HepG2 (cell line): ENCODE measurements at regions of chr7 and their contacts with region 1.

Region 1: GRCh38 chr7:44973610-44974401 is 5.0 kb downstream of the MYO1G start:
- DNase-seq: peak; percentile 34
- ATAC-seq: peak; percentile 22
- H3K4me3 ChIP-seq: peak overlapping the region in 1 of 3 experiments; percentile 59; a peak in 1 of 6 replicates
- H3K27ac ChIP-seq: no peak overlapping the region
- H3K4me1 ChIP-seq: peaks cover 67% of the 10 kb centered on the region
- H3K27me3 ChIP-seq: peaks cover 4 to 5% of the 10 kb centered on the region in 2 experiments; a peak in 2 of 5 replicates
- CTCF ChIP-seq: peak; percentile 64
- EP300 ChIP-seq: no peak
- POLR2A ChIP-seq: no peak
- RAD21 ChIP-seq: no peak

Region 2: GRCh38 chr7:44999245-45000095 is 25.7 kb after region 1 on chr7:
- CTCF ChIA-PET with region 1: no interaction called
- POLR2A ChIA-PET with region 1: interaction called, 83 read pairs
- in situ Hi-C with region 1: no loop called
- intact Hi-C with region 1: loop called (anchors 2 kb)
- DNase-seq: peak; percentile 97
- ATAC-seq: peak; percentile 95
- H3K4me3 ChIP-seq: peak overlapping the region; percentile 74 to 99 (median 80)
- H3K27ac ChIP-seq: peak overlapping the region; percentile 70
- H3K4me1 ChIP-seq: peaks cover 23% of the 10 kb centered on the region
- H3K27me3 ChIP-seq: no peaks in the 10 kb centered on the region
- CTCF ChIP-seq: peak; percentile 26; the same call in 1 of the 2 replicates
- EP300 ChIP-seq: no peak
- POLR2A ChIP-seq: peak; percentile 25 to 59; a peak in 3 of 4 replicates
- RAD21 ChIP-seq: 0 out of 2 replicates have a peak, but pooled peaks have one; percentile 18

Region 3: DNA sequence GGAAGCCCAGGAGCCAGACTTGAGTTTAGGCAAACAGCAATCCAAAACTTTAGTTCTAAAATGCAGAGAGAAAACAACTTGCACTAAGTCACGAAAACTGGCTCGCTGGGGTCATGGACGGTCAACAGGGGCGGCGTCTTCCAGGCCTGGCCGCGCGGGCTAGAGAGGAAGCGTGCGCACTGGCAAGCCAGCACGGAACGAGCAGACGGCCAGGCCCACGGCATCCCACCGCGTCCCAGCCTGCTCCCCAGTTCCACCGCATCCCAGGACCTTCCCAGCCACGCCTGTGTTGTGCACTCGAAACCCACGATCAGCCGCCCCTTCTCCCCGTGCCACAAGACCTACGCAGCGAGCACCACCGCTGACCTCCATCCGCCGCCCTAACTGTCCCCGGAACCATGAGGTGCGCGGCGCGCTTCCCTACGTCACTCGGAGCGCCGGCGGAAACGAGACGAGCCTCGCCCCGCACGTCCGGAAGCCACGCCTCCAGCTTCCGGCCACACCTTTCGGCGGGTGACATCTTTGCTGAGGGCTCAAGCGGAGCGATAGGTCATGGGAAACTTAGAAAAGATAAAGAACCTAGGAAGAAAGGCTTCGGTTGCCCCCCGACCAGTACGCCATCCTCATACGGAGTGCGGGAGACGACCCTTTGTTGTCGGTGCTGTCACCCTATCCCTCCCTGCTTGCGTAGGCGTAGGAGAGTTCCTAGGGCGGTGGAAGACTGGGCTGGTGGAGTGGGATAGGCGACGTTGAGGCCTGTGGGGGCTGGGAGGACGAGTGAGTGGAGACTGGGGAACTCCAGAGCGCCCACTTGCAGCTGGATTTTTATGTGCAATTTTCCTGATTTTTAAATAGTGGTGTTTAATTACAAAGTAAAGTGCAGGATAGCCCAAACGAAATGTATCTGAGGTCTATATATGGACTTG is 137.8 kb after region 1 on chr7 and contains the start of gene TBRG4:
- CTCF ChIA-PET with region 1: no interaction called
- POLR2A ChIA-PET with region 1: interaction called, 34 read pairs
- in situ Hi-C with region 1: no loop called
- intact Hi-C with region 1: no loop called
- DNase-seq: peak; percentile 90
- ATAC-seq: peak; percentile 92
- H3K4me3 ChIP-seq: peak within 1 kb of the TSS; percentile 83 to 97 (median 92)
- H3K27ac ChIP-seq: peak within 1 kb of the TSS; percentile 94
- H3K4me1 ChIP-seq: peaks cover 57% of the 10 kb centered on the region
- H3K27me3 ChIP-seq: no peaks in the 10 kb centered on the region; a peak in 1 of 5 replicates
- CTCF ChIP-seq: peak; percentile 55
- EP300 ChIP-seq: peak in 1 of 2 experiments; percentile 27; a peak in 1 of 4 replicates
- POLR2A ChIP-seq: peak; percentile 97
- RAD21 ChIP-seq: peak; percentile 43; the same call in 1 of the 2 replicates
- total RNA-seq, gene TBRG4: 87.8 and 90.3 TPM in 2 replicates

Region 4: GRCh38 chr7:45259966-45260646 is 286.3 kb after region 1 on chr7:
- CTCF ChIA-PET with region 1: no interaction called
- POLR2A ChIA-PET with region 1: no interaction called
- in situ Hi-C with region 1: loop called (anchors 25 kb)
- intact Hi-C with region 1: no loop called
- DNase-seq: peak; percentile 10
- ATAC-seq: peak; percentile 96
- H3K4me3 ChIP-seq: no peak overlapping the region
- H3K27ac ChIP-seq: no peak overlapping the region
- H3K4me1 ChIP-seq: no peaks in the 10 kb centered on the region
- H3K27me3 ChIP-seq: peaks cover 0 to 16% of the 10 kb centered on the region in 2 experiments; a peak in 1 of 5 replicates
- CTCF ChIP-seq: peak; percentile 95
- EP300 ChIP-seq: no peak
- POLR2A ChIP-seq: no peak
- RAD21 ChIP-seq: peak; percentile 84